Natural killer cell (primary cell): ENCODE measurements at regions of chr20 and their contacts with region 1.

Region 1: DNA sequence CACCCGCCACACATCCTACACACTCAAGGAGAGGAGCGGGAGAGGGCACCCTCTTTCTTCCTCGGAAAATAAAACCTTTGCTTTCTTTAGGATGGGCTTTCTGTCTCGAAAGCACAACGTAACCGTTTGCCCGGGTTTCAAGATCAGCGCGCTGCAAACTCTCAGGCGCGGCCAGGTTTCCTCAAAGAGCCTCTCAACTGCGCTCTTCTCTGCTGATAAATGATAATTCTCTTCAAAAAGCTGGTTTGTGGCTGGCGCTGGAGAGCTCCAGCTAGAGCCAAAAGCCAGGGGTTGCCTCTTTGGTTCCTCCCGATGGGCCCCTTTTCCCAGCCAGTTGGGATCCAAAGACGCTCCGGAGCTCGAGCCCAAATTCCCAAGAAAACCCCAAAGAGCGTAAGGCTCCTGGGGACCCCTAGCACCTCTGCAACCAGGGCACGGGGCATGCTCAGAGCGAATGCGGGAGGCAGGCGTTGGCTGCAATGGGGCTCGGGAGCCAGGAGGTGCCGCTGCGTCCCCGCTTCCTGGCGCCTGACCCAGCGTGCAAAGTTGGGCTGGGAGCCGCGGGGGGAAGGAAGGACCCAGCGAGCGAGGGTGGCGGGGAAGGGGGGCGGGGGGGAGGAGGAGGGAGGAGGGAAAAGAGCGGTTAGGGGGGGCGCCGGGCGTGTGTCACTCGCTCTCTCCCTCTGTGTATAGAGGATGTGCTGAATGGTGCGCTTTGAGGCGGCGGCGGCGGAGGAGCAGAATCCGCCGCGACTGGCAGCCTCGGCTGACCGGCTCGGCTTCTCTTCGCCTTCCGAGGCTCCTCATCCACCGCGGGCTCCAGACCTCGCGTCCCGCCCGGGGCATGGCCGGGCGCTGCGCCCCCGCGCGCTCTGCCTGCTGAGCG is at the start of gene PLCB1:
- DNase-seq: peak; percentile 81 to 92
- ATAC-seq: peak; percentile 92 to 96 (median 94)
- H3K4me3 ChIP-seq: peak within 1 kb of the TSS; percentile 81
- H3K4me3 Mint-ChIP-seq: peak within 1 kb of the TSS; percentile 92
- H3K27ac ChIP-seq: no peak within 1 kb of the TSS
- H3K27ac Mint-ChIP-seq: peak within 1 kb of the TSS; percentile 21 to 78
- H3K4me1 ChIP-seq: peaks cover 16% of the 10 kb centered on the region
- H3K4me1 Mint-ChIP-seq: peaks cover 40 to 41% of the 10 kb centered on the region in 2 donors
- H3K27me3 ChIP-seq: no peaks in the 10 kb centered on the region
- H3K27me3 Mint-ChIP-seq: peaks cover 6 to 7% of the 10 kb centered on the region in 2 donors
- CTCF ChIP-seq: peak; percentile 87
- total RNA-seq, gene PLCB1: 48.7 to 66.2 (median 57.7) TPM

Region 2: GRCh38 chr20:8043687-8044282 is 88.1 kb before region 1 on chr20:
- intact Hi-C with region 1: loop called (anchors 5 kb)
- DNase-seq: peak in 1 of 2 donors; percentile 84
- ATAC-seq: peak; percentile 64 to 84 (median 76)
- H3K4me3 ChIP-seq: no peak overlapping the region
- H3K4me3 Mint-ChIP-seq: no peak overlapping the region
- H3K27ac ChIP-seq: no peak overlapping the region
- H3K27ac Mint-ChIP-seq: no peak overlapping the region
- H3K4me1 ChIP-seq: no peaks in the 10 kb centered on the region
- H3K4me1 Mint-ChIP-seq: peaks cover 0 to 4% of the 10 kb centered on the region in 2 donors
- H3K27me3 ChIP-seq: no peaks in the 10 kb centered on the region
- H3K27me3 Mint-ChIP-seq: peaks cover 10 to 21% of the 10 kb centered on the region in 2 donors
- CTCF ChIP-seq: peak; percentile 97

Region 3: GRCh38 chr20:8156235-8157079 is 24.6 kb after region 1 on chr20:
- intact Hi-C with region 1: loop called (anchors 2 kb)
- DNase-seq: peak in 1 of 2 donors; percentile 63
- ATAC-seq: peak; percentile 81 to 89 (median 86)
- H3K4me3 ChIP-seq: no peak overlapping the region
- H3K4me3 Mint-ChIP-seq: peak overlapping the region; percentile 55
- H3K27ac ChIP-seq: no peak overlapping the region
- H3K27ac Mint-ChIP-seq: peak overlapping the region; percentile 81 to 83
- H3K4me1 ChIP-seq: peaks cover 25% of the 10 kb centered on the region
- H3K4me1 Mint-ChIP-seq: peaks cover 75% of the 10 kb centered on the region in 2 donors
- H3K27me3 ChIP-seq: no peaks in the 10 kb centered on the region
- H3K27me3 Mint-ChIP-seq: no peaks in the 10 kb centered on the region
- CTCF ChIP-seq: no peak

Region 4: GRCh38 chr20:8213831-8214587 is 82.2 kb after region 1 on chr20:
- intact Hi-C with region 1: loop called (anchors 5 kb)
- DNase-seq: peak in 1 of 2 donors; percentile 56
- ATAC-seq: peak; percentile 76 to 87 (median 82)
- H3K4me3 ChIP-seq: peak overlapping the region; percentile 28
- H3K4me3 Mint-ChIP-seq: peak overlapping the region; percentile 86
- H3K27ac ChIP-seq: peak overlapping the region; percentile 50
- H3K27ac Mint-ChIP-seq: peak overlapping the region; percentile 70 to 93
- H3K4me1 ChIP-seq: peaks cover 19% of the 10 kb centered on the region
- H3K4me1 Mint-ChIP-seq: peaks cover 55 to 70% of the 10 kb centered on the region in 2 donors
- H3K27me3 ChIP-seq: no peaks in the 10 kb centered on the region
- H3K27me3 Mint-ChIP-seq: no peaks in the 10 kb centered on the region
- CTCF ChIP-seq: no peak

Region 5: GRCh38 chr20:8305449-8305978 is 173.7 kb after region 1 on chr20:
- intact Hi-C with region 1: loop called (anchors 2 kb)
- DNase-seq: peak; percentile 56 to 90
- ATAC-seq: peak; percentile 81 to 98 (median 82)
- H3K4me3 ChIP-seq: no peak overlapping the region
- H3K4me3 Mint-ChIP-seq: peak overlapping the region; percentile 28
- H3K27ac ChIP-seq: no peak overlapping the region
- H3K27ac Mint-ChIP-seq: peak overlapping the region; percentile 24 to 54
- H3K4me1 ChIP-seq: peaks cover 7% of the 10 kb centered on the region
- H3K4me1 Mint-ChIP-seq: peaks cover 21% of the 10 kb centered on the region in 2 donors
- H3K27me3 ChIP-seq: no peaks in the 10 kb centered on the region
- H3K27me3 Mint-ChIP-seq: no peaks in the 10 kb centered on the region
- CTCF ChIP-seq: peak; percentile 76

Region 6: DNA sequence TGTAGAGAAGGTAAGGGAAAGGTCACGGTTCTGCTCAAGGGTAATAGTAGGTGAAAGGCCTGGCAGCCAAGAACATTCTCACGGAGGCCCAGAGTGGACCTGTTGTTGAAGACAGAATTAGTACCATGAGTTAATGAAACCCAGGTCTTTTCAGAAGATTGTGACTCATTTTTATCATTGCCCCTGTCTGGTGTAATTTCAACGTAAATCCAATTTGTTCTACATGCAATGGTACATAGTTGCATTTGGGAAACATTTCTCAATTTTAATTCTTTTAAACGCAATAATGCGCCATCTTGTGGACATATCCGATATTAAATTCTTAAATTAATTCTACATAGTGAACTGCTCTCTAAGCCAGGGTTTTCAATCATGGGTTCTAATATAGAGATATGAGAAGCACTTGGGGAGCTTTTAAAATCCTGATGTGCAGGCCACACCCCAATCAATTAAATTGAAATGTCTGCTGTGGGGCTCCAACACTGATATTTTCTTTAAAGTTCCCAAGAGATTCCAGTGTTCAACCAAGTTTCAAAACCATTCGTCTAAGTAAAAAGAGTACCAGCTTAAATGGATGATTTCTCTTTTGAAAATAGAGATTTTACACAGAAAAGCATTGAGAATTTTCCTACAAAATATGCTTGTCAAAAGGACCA is 257.7 kb after region 1 on chr20:
- intact Hi-C with region 1: loop called (anchors 1 kb)
- DNase-seq: peak in 1 of 2 donors; percentile 69
- ATAC-seq: peak in 2 of 3 donors; percentile 49 to 54
- H3K4me3 ChIP-seq: no peak overlapping the region
- H3K4me3 Mint-ChIP-seq: no peak overlapping the region
- H3K27ac ChIP-seq: no peak overlapping the region
- H3K27ac Mint-ChIP-seq: no peak overlapping the region
- H3K4me1 ChIP-seq: no peaks in the 10 kb centered on the region
- H3K4me1 Mint-ChIP-seq: peaks cover 27 to 30% of the 10 kb centered on the region in 2 donors
- H3K27me3 ChIP-seq: no peaks in the 10 kb centered on the region
- H3K27me3 Mint-ChIP-seq: no peaks in the 10 kb centered on the region
- CTCF ChIP-seq: peak; percentile 68

Region 7: GRCh38 chr20:8722276-8722928 is 590.6 kb after region 1 on chr20:
- intact Hi-C with region 1: loop called (anchors 1 kb)
- DNase-seq: peak in 1 of 2 donors; percentile 73
- ATAC-seq: peak; percentile 73 to 81 (median 73)
- H3K4me3 ChIP-seq: no peak overlapping the region
- H3K4me3 Mint-ChIP-seq: no peak overlapping the region
- H3K27ac ChIP-seq: no peak overlapping the region
- H3K27ac Mint-ChIP-seq: no peak overlapping the region
- H3K4me1 ChIP-seq: no peaks in the 10 kb centered on the region
- H3K4me1 Mint-ChIP-seq: no peaks in the 10 kb centered on the region
- H3K27me3 ChIP-seq: no peaks in the 10 kb centered on the region
- H3K27me3 Mint-ChIP-seq: no peaks in the 10 kb centered on the region
- CTCF ChIP-seq: peak; percentile 94